Motor neuron (in vitro differentiated cells): ENCODE measurements at regions of chr1 and their contacts with region 1.

Region 1: DNA sequence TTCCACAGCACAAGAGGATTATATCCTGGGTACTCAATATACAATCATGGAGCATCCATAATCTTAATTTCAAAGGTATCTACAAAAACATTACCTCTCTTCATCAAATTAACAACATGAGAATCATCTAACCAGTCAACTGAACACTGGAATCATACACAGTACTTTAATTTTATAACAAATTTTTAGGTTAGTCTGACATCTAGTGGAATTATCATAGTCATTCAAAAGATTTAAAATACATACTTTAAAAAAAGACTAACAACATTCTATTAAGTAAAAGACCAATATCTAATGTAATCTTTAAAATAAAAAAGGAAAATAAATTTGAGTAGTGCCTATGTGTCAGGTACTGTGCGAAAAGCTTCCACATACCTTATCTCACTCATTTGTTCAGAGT is 16.8 kb upstream of the SH3GLB1 start:
- ATAC-seq: peak in 2 of 8 experiments; percentile 19 to 22
- H3K4me3 ChIP-seq: no peak overlapping the region
- H3K27ac ChIP-seq: no peak overlapping the region
- H3K4me1 ChIP-seq: peaks cover 0 to 3% of the 10 kb centered on the region in 2 donors

Region 2: GRCh38 chr1:86409416-86410021 is 278.1 kb before region 1 on chr1:
- in situ Hi-C with region 1: no loop called
- ATAC-seq: peak in 7 of 8 experiments; percentile 40 to 100 (median 75)
- H3K4me3 ChIP-seq: no peak overlapping the region
- H3K27ac ChIP-seq: no peak overlapping the region
- H3K4me1 ChIP-seq: no peaks in the 10 kb centered on the region

Region 3: DNA sequence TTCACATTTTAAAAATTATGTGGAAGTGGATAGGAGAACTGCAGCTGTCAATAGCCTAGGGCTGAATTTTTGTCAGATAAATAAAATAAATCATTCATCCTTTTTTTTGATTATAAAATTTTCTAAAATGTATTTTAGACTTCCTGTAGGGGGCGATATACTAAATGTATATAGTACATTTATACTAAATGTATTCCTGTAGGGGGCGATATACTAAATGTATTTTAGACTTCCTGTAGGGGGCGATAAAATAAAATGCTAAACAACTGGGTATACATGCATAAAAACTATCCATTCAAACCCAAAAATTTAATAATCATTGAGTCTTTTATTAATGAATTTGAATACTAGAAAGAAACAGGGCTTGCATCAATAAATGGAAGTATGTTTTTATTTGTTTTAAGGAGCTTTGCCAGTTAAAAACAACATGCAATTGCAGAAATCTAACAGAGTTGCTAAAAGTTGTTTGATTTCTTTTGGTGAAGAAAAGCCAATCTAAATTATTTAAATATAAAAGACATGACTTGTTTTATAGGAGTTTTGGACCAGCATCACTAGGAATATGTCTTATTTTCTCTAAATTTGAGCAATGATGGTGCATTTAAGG is 187.5 kb before region 1 on chr1:
- in situ Hi-C with region 1: loop called in 1 of 9 experiments (anchors 25 kb)
- ATAC-seq: no peak
- H3K4me3 ChIP-seq: no peak overlapping the region
- H3K27ac ChIP-seq: no peak overlapping the region
- H3K4me1 ChIP-seq: no peaks in the 10 kb centered on the region